HCT116 (cell line): ENCODE measurements at regions of chr22 and their contacts with region 1.

Region 1: GRCh38 chr22:17171313-17172171 is 12.5 kb upstream of the HDHD5 start:
- DNase-seq: peak; percentile 82
- ATAC-seq: peak; percentile 93
- H3K4me3 ChIP-seq: peak overlapping the region; percentile 62 to 69
- H3K27ac ChIP-seq: peak overlapping the region; percentile 98
- H3K4me1 ChIP-seq: peaks cover 10% of the 10 kb centered on the region in 2 experiments
- H3K27me3 ChIP-seq: no peaks in the 10 kb centered on the region
- CTCF ChIP-seq: peak; percentile 53 to 88 (median 68); a peak in 5 of 6 replicates
- POLR2A ChIP-seq: peak; percentile 55
- RAD21 ChIP-seq: peak; percentile 24

Region 2: DNA sequence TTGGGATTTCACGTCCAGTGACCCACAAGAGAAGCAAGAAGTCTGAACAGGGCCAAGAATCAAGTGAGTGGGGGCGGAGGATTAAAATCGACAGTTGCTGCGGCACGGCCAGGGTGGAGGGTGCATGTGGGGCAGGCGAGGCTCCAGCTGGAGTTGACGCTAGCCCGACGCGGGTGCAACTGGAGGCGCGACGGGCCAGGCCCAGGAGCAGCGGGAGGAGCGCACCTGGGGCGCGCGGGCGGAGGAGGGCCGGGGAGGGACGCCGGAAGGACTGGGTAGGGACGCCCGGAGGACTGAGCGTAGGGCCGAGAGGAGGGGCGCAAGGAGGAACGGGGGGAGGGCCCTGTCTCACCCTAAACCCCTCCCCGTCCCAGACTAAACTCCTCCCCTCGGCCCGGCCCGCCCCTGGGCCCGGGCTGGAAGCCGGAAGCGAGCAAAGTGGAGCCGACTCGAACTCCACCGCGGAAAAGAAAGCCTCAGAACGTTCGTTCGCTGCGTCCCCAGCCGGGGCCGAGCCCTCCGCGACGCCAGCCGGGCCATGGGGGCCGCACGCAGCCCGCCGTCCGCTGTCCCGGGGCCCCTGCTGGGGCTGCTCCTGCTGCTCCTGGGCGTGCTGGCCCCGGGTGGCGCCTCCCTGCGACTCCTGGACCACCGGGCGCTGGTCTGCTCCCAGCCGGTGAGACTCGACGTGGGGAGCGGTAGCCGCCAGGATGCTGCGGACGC is 86.8 kb before region 1 on chr22 and contains the start of gene IL17RA:
- CTCF ChIA-PET with region 1: interaction called, 14 read pairs
- POLR2A ChIA-PET with region 1: no interaction called
- RAD21 ChIA-PET with region 1: no interaction called
- intact Hi-C with region 1: loop called (anchors 2 kb)
- DNase-seq: peak; percentile 66
- ATAC-seq: peak; percentile 98
- H3K4me3 ChIP-seq: peak within 1 kb of the TSS; percentile 77 to 91
- H3K27ac ChIP-seq: peak within 1 kb of the TSS; percentile 93
- H3K4me1 ChIP-seq: peaks cover 10 to 20% of the 10 kb centered on the region in 2 experiments; a peak in 3 of 4 replicates
- H3K27me3 ChIP-seq: no peaks in the 10 kb centered on the region
- CTCF ChIP-seq: no peak
- POLR2A ChIP-seq: peak; percentile 73
- RAD21 ChIP-seq: no peak
- total RNA-seq, gene IL17RA: 17.3 TPM

Region 3: DNA sequence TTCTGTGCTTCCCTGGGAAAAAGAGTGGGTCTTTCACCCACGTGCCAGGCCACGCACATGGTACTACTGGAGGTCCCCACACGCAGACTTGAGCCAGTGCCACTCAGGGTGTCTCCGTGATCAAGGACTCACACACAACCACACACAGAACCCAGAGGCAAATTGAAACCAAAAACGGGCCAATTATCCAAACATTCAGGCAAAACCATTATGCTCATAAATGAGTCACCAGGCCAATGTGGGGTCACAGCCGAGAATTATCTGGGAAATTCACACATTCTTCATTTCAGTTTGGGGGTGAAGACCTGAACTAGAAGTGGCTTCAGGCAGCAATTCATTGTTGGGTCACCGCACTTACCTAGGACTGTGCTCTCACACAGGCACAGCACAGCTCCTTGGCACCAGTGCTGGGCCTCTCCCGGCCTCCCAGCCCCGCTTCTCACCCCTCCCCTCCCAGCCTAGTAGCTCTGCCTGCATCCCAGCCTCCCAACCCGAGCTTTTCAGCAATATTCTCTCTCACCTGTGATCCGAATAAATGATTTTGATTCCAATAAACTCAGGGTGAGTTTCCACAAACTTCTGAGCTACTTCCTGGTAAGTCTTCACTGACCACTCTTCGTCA is 19.7 kb after region 1 on chr22:
- CTCF ChIA-PET with region 1: interaction called, 32 read pairs
- POLR2A ChIA-PET with region 1: interaction called, 6 read pairs
- RAD21 ChIA-PET with region 1: no interaction called
- intact Hi-C with region 1: no loop called
- DNase-seq: no peak
- ATAC-seq: peak; percentile 44; the same call in 1 of the 2 replicates
- H3K4me3 ChIP-seq: 0 out of 4 replicates have a peak overlapping the region, but pooled peaks of 1 of the 2 experiments have one; percentile 6
- H3K27ac ChIP-seq: no peak overlapping the region
- H3K4me1 ChIP-seq: peaks cover 5 to 10% of the 10 kb centered on the region in 2 experiments; a peak in 3 of 4 replicates
- H3K27me3 ChIP-seq: no peaks in the 10 kb centered on the region
- CTCF ChIP-seq: no peak
- POLR2A ChIP-seq: no peak
- RAD21 ChIP-seq: no peak

Region 4: DNA sequence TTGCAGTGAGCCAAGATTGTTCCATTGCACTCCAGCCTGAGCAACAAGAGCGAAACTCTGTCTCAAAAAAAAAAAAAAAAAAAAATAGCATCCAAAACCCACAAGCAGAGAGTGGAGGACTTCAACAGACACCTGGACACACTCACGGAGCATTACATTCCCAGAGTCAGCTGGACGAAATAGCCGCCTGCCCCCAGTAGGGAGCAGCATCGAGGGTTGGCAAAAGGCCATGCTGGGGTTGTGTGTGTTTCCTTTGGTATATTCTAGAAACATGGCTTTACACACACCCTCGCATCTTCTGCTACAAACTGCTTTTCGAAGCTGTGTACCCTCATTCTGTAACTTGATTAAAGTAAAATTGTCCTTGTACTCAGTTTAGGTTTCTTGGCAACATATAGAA is 42.4 kb after region 1 on chr22:
- CTCF ChIA-PET with region 1: interaction called, 15 read pairs
- POLR2A ChIA-PET with region 1: no interaction called
- RAD21 ChIA-PET with region 1: interaction called in 1 of 2 experiments, 3 read pairs
- intact Hi-C with region 1: no loop called
- DNase-seq: peak; percentile 40
- ATAC-seq: peak; percentile 89
- H3K4me3 ChIP-seq: no peak overlapping the region
- H3K27ac ChIP-seq: no peak overlapping the region
- H3K4me1 ChIP-seq: peaks cover 0 to 3% of the 10 kb centered on the region in 2 experiments; a peak in 1 of 4 replicates
- H3K27me3 ChIP-seq: no peaks in the 10 kb centered on the region
- CTCF ChIP-seq: peak; percentile 12 to 73 (median 65); a peak in 4 of 6 replicates
- POLR2A ChIP-seq: no peak
- RAD21 ChIP-seq: peak; percentile 28

Region 5: DNA sequence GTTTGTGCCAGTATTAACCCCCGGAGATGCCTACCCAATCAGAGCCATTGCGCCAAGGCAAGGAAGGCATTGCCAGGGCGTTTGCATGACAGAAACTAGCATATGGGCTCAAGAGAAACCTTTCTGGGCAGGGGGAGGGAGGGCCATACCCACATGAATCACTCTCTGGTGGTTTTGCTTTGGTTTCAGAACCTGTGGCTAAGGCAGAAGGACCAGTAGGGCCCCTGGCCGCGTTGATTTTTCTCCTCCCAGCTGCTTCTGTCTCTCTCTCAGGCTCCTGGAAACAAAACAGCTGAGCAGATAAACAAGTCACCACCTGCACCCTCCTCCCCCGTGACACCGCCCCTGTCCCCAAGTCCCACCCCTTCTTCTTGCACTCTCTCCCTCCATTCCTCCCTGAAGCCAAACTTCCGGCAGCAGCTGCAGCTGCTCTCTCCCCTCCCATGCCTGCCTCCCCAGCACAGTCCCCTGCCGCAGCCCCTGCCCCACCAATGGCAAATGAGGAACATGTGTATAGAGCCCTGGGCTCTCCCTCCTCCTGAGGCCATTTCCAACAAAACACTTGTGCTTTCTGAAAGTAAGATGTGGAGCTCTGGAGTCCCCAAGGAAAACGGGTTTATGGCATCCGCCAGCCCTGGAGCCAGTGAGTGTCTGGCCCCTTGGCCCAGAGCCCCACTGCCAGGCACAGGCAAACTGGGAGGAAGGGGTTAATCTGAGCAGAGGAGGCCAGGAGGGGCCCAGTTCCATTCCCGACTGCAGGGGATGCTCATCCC is 86.7 kb after region 1 on chr22:
- CTCF ChIA-PET with region 1: no interaction called
- POLR2A ChIA-PET with region 1: no interaction called
- RAD21 ChIA-PET with region 1: no interaction called
- intact Hi-C with region 1: no loop called
- DNase-seq: no peak
- ATAC-seq: peak; percentile 49; the same call in 1 of the 2 replicates
- H3K4me3 ChIP-seq: no peak overlapping the region
- H3K27ac ChIP-seq: no peak overlapping the region
- H3K4me1 ChIP-seq: no peaks in the 10 kb centered on the region
- H3K27me3 ChIP-seq: no peaks in the 10 kb centered on the region
- CTCF ChIP-seq: no peak
- POLR2A ChIP-seq: no peak
- RAD21 ChIP-seq: no peak

Region 6: DNA sequence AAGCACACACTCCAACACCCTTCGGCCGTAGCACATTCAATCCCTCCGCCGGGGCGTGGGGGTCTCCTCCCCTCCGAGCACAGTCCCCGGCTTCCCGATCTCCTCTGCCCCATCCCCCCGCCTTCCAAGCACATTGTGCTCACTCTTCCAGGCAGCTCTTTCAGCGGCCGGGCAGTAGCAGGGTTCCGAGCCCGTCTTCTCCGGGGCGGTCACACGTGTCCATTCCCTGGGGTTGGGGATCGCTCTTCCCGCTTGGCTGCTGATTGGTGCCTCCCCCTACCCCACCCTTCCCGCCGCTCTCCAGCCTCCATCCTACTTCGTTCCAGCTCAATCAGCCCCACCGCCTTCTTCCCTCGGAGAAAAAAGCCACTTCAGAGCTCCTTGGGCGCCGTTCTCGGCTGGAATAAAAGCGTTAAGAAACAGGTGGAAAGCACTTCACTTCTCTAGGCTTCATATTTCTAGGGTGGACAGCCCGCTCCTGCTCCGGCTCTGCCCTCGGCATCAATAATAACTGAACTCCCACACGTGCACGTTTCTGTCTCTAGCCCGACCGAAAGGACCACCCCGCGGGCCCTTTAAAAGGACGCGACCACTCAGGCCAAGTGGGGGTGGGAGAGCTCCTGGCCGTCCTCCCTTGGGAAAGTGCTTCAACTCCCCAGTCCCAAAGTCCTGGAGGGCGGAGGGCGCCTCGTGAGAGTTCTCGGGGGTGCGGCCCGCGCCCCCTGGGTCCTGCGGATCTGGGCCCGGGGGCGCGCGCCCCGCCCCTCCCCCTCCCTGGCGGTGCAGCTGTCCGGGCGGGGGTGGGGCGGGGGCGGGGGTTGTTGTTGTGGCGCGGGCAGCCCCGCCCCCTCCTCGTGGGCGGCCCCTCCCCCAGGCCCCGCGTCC is 197.3 kb after region 1 on chr22:
- CTCF ChIA-PET with region 1: interaction called, 7 read pairs
- POLR2A ChIA-PET with region 1: interaction called, 3 read pairs
- RAD21 ChIA-PET with region 1: interaction called in 1 of 2 experiments, 5 read pairs
- intact Hi-C with region 1: loop called (anchors 5 kb)
- DNase-seq: peak; percentile 34
- ATAC-seq: peak; percentile 73
- H3K4me3 ChIP-seq: peak overlapping the region; percentile 59 to 70
- H3K27ac ChIP-seq: peak overlapping the region; percentile 62; the same call in 1 of the 2 replicates
- H3K4me1 ChIP-seq: peaks cover 21 to 26% of the 10 kb centered on the region in 2 experiments; a peak in 3 of 4 replicates
- H3K27me3 ChIP-seq: no peaks in the 10 kb centered on the region
- CTCF ChIP-seq: no peak
- POLR2A ChIP-seq: no peak
- RAD21 ChIP-seq: no peak